Activated T-helper 1 cell treated with anti-CD3 and anti-CD28 coated beads, Interleukin-12 subunit alpha, Interleukin-12 subunit beta, Interleukin-2, Interleukin-4 antibody, amounts not matched to agents 30 ng/mL and 10 ng/mL and 1 ng/mL, durations not matched to agents 14 hours and 24 hours and 36 hours (primary cell): ENCODE measurements at regions of chr12 and their contacts with region 1.

Region 1: GRCh38 chr12:95942524-95943329 is at the start of gene CCDC38:
- DNase-seq: peak; percentile 78
- H3K4me3 Mint-ChIP-seq: peak within 1 kb of the TSS; percentile 92
- H3K27ac Mint-ChIP-seq: peak within 1 kb of the TSS; percentile 95
- H3K4me1 Mint-ChIP-seq: peaks cover 5% of the 10 kb centered on the region
- H3K27me3 Mint-ChIP-seq: peaks cover 24% of the 10 kb centered on the region
- total RNA-seq, gene CCDC38: not detected in 2 replicates

Region 2: GRCh38 chr12:95473884-95474659 is 468.7 kb before region 1 on chr12 and contains the start of gene METAP2:
- intact Hi-C with region 1: loop called (anchors 10 kb)
- DNase-seq: peak; percentile 86
- H3K4me3 Mint-ChIP-seq: peak within 1 kb of the TSS; percentile 100
- H3K27ac Mint-ChIP-seq: peak within 1 kb of the TSS; percentile 100
- H3K4me1 Mint-ChIP-seq: peaks cover 46% of the 10 kb centered on the region
- H3K27me3 Mint-ChIP-seq: no peaks in the 10 kb centered on the region
- total RNA-seq, gene METAP2: 118 and 121 TPM in 2 replicates

Region 3: GRCh38 chr12:95848575-95849388 is 93.9 kb before region 1 on chr12:
- intact Hi-C with region 1: no loop called
- DNase-seq: no peak
- H3K4me3 Mint-ChIP-seq: no peak overlapping the region
- H3K27ac Mint-ChIP-seq: peak overlapping the region; percentile 46
- H3K4me1 Mint-ChIP-seq: no peaks in the 10 kb centered on the region
- H3K27me3 Mint-ChIP-seq: peaks cover 14% of the 10 kb centered on the region

Region 4: GRCh38 chr12:95918194-95918993 is 24.3 kb before region 1 on chr12:
- intact Hi-C with region 1: loop called (anchors 2 kb)
- DNase-seq: peak; percentile 17
- H3K4me3 Mint-ChIP-seq: no peak overlapping the region
- H3K27ac Mint-ChIP-seq: no peak overlapping the region
- H3K4me1 Mint-ChIP-seq: no peaks in the 10 kb centered on the region
- H3K27me3 Mint-ChIP-seq: peaks cover 20% of the 10 kb centered on the region

Region 5: DNA sequence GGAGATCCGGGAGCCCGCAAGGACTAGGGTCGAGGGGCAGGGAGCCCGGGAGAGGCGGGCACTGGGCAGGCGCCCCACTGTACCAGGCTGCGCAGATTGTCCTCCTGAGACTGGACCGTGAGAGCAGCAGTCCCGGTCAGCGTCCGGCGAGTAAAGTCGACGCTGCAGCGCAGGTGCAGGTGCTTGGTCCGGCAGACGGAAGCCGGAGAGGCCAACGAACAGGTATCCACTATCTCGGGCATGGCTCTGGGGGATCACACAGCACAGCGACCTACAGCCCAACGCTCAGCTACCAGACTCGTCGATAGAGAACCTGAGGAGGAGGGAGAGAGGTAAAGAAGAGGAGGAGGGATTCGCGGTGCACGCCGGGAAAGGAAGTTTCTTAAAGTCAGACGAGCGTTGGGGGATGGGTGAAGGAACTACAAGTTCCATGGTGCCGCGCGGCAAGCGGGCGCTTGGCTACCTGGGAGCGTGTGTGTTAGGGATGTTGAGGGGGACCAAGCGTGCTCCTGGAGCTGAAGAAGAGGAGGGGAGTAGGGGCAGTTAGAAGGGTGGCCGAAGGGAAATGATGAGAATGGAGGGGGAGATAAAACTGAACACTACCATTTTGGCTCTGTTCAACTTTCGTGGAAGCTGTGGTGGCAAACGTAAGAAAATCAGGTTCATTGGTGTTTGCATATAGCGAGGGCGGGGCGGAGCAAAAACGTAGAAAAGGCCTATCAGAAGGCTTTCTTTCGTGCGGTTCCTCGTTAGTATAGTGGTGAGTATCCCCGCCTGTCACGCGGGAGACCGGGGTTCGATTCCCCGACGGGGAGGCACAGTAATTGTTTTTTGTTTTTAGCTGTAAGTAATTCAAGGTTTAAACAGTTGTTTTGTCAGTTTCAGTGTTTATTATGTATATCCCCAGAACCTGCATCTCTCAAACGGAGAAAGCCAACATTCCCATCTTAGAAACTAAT is 92.8 kb after region 1 on chr12 and contains the start of gene LTA4H:
- intact Hi-C with region 1: loop called (anchors 2 kb)
- DNase-seq: peak; percentile 93
- H3K4me3 Mint-ChIP-seq: no peak within 1 kb of the TSS
- H3K27ac Mint-ChIP-seq: no peak within 1 kb of the TSS
- H3K4me1 Mint-ChIP-seq: peaks cover 10% of the 10 kb centered on the region
- H3K27me3 Mint-ChIP-seq: no peaks in the 10 kb centered on the region
- total RNA-seq, gene LTA4H: 57.3 and 59.6 TPM in 2 replicates

Region 6: DNA sequence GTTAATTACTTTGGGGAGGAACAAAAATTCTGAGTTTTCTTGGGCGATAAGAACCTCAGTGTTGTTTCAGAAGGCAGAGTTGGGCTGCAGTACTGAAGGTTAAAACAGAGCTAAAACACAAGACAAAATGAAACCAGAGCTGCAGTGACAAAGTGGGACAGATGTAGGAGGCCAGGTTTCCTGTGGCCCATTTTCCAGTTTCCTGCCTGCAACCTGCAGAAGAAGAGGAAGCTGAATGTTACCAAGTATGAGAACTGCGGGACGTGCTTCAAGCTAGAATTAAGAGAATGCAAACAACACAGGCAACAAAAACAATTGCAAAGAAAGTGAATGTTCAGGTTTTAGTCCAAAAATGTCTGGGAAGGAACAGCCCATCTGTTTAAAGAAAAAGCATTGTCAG is 269.3 kb after region 1 on chr12:
- intact Hi-C with region 1: loop called (anchors 5 kb)
- DNase-seq: no peak
- H3K4me3 Mint-ChIP-seq: peak overlapping the region; percentile 76
- H3K27ac Mint-ChIP-seq: peak overlapping the region; percentile 76
- H3K4me1 Mint-ChIP-seq: peaks cover 78% of the 10 kb centered on the region
- H3K27me3 Mint-ChIP-seq: no peaks in the 10 kb centered on the region

Region 7: DNA sequence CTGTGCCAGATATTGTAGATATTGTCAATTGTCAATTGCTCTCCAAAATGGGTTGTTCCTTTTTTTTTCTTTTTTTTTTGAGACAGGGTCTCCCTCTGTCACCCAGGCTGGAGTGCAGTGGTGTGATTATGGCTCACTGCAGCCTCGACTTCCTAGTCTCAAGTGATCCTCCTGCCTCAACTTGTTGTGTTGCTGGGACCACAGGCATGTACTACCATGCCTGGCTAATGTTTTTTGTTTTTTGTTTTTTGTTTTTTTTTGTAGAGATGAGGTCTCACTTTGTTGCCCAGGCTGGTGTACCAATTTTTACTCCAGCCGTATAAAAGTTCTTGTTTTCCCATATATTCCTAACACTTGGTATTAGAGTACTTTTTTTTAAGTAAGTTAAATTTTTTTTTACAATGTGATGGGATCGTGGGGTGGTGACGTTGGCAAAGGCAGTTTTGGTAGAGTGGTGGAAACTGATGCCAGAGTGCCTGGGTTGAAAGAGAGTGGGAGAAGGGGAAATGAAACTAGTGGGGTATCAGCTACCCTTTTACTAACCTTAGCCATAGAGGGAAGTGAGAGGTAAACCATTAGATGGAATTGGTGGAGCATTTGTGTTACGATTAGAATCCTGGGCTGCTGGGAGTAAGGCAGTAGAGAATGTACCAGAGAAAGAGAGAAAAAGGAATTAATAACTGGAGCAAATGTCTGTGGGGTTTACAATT is 513.7 kb after region 1 on chr12:
- intact Hi-C with region 1: no loop called
- DNase-seq: no peak
- H3K4me3 Mint-ChIP-seq: no peak overlapping the region
- H3K27ac Mint-ChIP-seq: no peak overlapping the region
- H3K4me1 Mint-ChIP-seq: peaks cover 5% of the 10 kb centered on the region
- H3K27me3 Mint-ChIP-seq: peaks cover 1% of the 10 kb centered on the region